ENCODE measurements at regions of chr14 and their contacts with region 1.

Region 1: DNA sequence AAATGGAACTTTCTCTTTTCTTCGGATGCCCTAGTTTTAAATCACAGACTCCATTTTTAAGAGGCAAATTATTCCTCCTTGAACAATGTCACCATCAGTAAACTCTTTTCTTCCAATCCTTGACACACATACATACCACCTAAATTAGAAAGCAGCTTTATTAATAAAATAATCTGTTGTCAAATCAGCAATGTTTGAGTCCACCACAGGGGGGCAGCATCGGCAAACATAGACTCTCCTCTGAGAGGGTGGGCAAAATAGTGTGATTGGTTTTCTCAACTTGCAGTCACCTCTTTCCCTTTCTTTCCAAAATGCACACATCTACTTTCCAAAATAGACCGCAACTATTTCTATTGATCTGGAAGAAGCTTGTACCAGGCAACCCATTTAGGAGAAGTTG is 438.4 kb upstream of the OR4E1 start:
- DNase-seq: peak in 1 of 2 experiments; percentile 76
- H3K4me3 ChIP-seq: no peak overlapping the region
- H3K27ac ChIP-seq: no peak overlapping the region
- H3K4me1 ChIP-seq: no peaks in the 10 kb centered on the region
- H3K27me3 ChIP-seq: no peaks in the 10 kb centered on the region
- CTCF ChIP-seq: peak; percentile 40 to 65 (median 58)
- EP300 ChIP-seq: no peak
- POLR2A ChIP-seq: no peak
- RAD21 ChIP-seq: peak; percentile 46 to 62; a peak in 3 of 4 replicates

Region 2: DNA sequence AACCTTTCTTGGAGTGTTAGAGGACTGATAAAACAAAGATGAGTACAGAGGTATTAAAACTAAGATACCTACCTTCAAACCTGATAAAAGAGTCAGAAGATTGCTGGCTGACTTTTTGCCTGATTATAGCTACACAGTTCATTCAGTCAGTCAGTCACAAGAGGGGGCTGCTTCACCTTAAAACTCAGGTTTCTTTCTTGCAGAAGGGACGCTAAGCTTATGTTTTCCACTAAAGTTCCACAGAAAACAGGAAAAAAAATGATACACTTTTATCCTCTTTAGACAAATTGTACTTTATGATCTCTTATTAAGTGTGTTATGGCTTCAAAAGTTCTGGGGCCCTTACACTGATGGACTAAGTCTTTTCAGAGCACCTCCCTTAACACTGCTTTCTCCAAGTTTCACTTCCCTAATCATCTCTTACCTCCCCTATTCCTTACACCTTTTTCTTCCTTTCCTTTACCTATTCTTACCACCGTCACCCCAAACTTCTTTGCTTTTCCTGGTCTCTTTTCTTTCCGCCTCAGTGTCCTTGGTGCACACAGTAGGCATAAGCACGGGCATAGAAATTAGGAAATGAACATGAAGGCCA is 10.3 kb after region 1 on chr14:
- CTCF ChIA-PET with region 1: interaction called, 12 read pairs
- POLR2A ChIA-PET with region 1: interaction called, 3 read pairs
- DNase-seq: no peak
- H3K4me3 ChIP-seq: no peak overlapping the region
- H3K27ac ChIP-seq: no peak overlapping the region
- H3K4me1 ChIP-seq: no peaks in the 10 kb centered on the region
- H3K27me3 ChIP-seq: no peaks in the 10 kb centered on the region
- CTCF ChIP-seq: peak in 2 of 3 experiments; percentile 44 to 60; a peak in 3 of 4 replicates
- EP300 ChIP-seq: no peak
- POLR2A ChIP-seq: no peak
- RAD21 ChIP-seq: peak; percentile 55 to 65

Region 3: DNA sequence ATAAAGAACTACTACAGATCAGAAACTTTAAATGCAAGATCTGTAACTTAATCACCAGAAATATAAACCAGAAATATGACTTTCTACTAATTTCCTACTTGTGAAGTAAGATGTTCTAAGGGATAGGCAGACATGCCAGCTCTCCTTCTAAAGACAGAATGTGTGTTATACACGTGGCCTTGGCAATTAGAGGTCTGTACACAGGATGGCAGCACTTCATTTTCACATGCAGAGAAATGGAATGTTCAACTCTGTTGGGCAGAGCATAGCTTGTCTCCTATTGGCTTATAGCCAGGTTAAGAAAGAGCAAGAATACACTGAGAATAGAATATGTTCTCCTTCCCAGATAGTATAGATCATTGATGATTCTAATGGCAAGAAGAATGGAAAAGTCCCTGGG is 73.2 kb after region 1 on chr14:
- CTCF ChIA-PET with region 1: interaction called, 11 read pairs
- POLR2A ChIA-PET with region 1: no interaction called
- DNase-seq: no peak
- H3K4me3 ChIP-seq: no peak overlapping the region
- H3K27ac ChIP-seq: no peak overlapping the region
- H3K4me1 ChIP-seq: 0 out of 7 replicates have a peak, but pooled peaks cover 0 to 2% (median 0%) of the 10 kb centered on the region in 4 experiments
- H3K27me3 ChIP-seq: no peaks in the 10 kb centered on the region
- CTCF ChIP-seq: peak in 2 of 3 experiments; percentile 15 to 25; a peak in 2 of 4 replicates
- EP300 ChIP-seq: no peak
- POLR2A ChIP-seq: no peak
- RAD21 ChIP-seq: peak; percentile 8 to 18; a peak in 2 of 4 replicates